GM10248 (cell line): ENCODE measurements at regions of chr20 and their contacts with region 1.

Region 1: DNA sequence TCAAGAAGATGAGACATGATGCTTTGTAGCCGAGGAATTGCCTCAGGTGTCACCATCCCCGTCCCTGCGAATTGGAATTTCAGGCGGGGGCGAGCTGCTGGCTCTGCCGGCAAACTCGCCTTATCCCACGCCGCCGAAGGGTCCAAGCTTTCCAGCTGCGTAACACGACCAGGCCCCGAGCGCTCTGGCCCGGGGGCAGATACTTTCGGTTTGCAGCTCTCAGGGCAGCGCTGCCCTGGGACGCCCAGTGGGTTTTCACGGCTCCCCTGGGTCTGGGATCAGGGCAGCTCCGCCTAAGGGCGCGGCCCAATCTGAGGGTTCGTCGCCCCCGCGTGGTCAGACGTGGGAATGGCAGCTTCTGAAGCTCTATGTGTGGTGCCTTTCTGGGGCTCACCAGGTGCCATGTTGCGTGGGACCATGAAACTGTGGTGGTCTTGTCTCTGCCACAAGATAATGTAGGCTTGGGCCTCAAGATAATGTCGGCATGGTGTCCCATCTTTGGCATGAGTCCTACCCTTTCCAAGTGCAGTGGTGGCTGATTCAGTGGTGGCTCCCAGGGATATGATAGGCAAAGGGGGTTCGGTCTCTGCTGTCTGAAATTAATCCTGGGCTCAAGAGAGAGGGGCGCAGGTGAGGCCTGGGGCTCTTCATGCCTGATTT is 20.9 kb downstream of the PIGT start:
- DNase-seq: peak; percentile 86
- CTCF ChIP-seq: peak; percentile 86

Region 2: DNA sequence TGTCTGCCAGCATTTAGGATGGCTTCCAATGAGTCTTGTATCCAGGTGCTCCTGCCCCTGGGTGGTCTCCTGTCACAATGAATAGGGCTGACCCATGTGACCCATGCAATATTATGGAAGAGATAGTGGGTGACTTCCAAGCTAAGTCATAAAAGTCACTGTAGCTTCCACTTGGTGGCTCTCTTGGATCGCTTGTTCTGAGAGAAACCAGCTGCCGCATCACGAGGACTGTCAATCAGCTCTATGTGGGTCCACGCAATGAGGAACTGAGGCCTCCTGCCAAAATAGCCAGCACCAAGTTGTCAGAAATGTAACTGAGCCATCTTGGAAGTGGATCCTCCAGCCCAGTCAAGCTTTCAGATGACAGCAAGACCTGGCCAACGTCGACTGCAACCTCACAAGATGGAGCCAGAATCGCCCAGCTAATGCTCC is 113.9 kb before region 1 on chr20:
- CTCF ChIA-PET with region 1: interaction called, 55 read pairs
- POLR2A ChIA-PET with region 1: no interaction called
- DNase-seq: peak; percentile 63
- CTCF ChIP-seq: peak; percentile 15

Region 3: GRCh38 chr20:45362804-45363610 is 73.9 kb before region 1 on chr20 and contains the start of gene SYS1:
- CTCF ChIA-PET with region 1: interaction called, 488 read pairs
- POLR2A ChIA-PET with region 1: interaction called, 8 read pairs
- DNase-seq: peak; percentile 96
- CTCF ChIP-seq: peak; percentile 74

Region 4: GRCh38 chr20:45406259-45407066 is 30.4 kb before region 1 on chr20:
- CTCF ChIA-PET with region 1: interaction called, 20 read pairs
- POLR2A ChIA-PET with region 1: no interaction called
- DNase-seq: peak; percentile 46
- CTCF ChIP-seq: no peak

Region 5: GRCh38 chr20:45450097-45450818 is 13.4 kb after region 1 on chr20:
- CTCF ChIA-PET with region 1: interaction called, 120 read pairs
- POLR2A ChIA-PET with region 1: no interaction called
- DNase-seq: peak; percentile 32
- CTCF ChIP-seq: peak; percentile 49

Region 6: GRCh38 chr20:45575931-45576330 is 139.1 kb after region 1 on chr20:
- CTCF ChIA-PET with region 1: no interaction called
- POLR2A ChIA-PET with region 1: no interaction called
- DNase-seq: no peak
- CTCF ChIP-seq: no peak